Right cardiac atrium (tissue), 5 donors: ENCODE measurements at regions of chr9 and their contacts with region 1.

Region 1: GRCh38 chr9:121538246-121538645 is 38.6 kb upstream of the GGTA1 start:
- DNase-seq: no peak
- ATAC-seq: peak in 1 of 2 donors; percentile 27
- H3K4me3 ChIP-seq: no peak overlapping the region
- H3K27ac ChIP-seq: no peak overlapping the region
- H3K4me1 ChIP-seq: peaks cover 2% of the 10 kb centered on the region
- H3K27me3 ChIP-seq: no peaks in the 10 kb centered on the region

Region 2: GRCh38 chr9:121478816-121479676 is 59.2 kb before region 1 on chr9:
- intact Hi-C with region 1: loop called in 2 of 4 experiments (anchors 10 kb)
- DNase-seq: peak; percentile 63 to 90 (median 67)
- ATAC-seq: peak; percentile 77 to 82
- H3K4me3 ChIP-seq: no peak overlapping the region
- H3K27ac ChIP-seq: peak overlapping the region; percentile 82
- H3K4me1 ChIP-seq: peaks cover 28% of the 10 kb centered on the region
- H3K27me3 ChIP-seq: no peaks in the 10 kb centered on the region